CD8-positive, alpha-beta memory T cell (primary cell): ENCODE measurements at regions of chr11 and their contacts with region 1.

Region 1: GRCh38 chr11:46700241-46701077 is at the starts of genes ARHGAP1 and ZNF408:
- DNase-seq: peak; percentile 98 to 100 (median 99)
- H3K4me3 ChIP-seq: peak within 1 kb of the TSS; percentile 90
- H3K4me3 Mint-ChIP-seq: peak within 1 kb of the TSS; percentile 95 to 100 (median 99)
- H3K27ac ChIP-seq: peak within 1 kb of the TSS; percentile 92
- H3K27ac Mint-ChIP-seq: peak within 1 kb of the TSS; percentile 78 to 98 (median 94)
- H3K4me1 ChIP-seq: peaks cover 55% of the 10 kb centered on the region
- H3K4me1 Mint-ChIP-seq: peaks cover 43 to 74% (median 58%) of the 10 kb centered on the region in 3 donors
- H3K27me3 ChIP-seq: no peaks in the 10 kb centered on the region
- H3K27me3 Mint-ChIP-seq: no peaks in the 10 kb centered on the region
- total RNA-seq, gene ARHGAP1: 56.8 TPM
- total RNA-seq, gene ZNF408: 13.2 to 14.4 TPM

Region 2: DNA sequence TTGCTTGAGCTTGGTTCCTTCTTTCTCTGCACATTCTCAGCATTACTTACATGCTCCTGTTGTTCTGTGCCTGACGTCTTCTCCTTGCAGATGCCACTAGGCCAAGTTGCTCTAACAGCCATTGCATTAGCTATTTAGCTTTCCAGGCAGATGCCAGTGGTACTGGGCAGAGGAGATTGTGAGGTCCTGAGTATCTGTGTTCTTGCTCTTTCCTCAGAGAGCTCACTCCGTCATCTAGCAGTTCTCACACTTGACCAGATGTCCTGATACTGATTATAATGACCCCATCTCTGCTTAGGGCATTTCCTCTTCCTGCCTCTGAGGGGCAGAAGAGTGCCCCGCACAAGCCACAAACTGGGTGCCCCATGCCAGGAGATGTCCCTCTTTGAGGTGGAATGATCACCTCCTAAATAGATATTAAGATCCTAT is 30.7 kb before region 1 on chr11:
- CTCF ChIA-PET with region 1: interaction called, 10 read pairs
- POLR2A ChIA-PET with region 1: interaction called, 12 read pairs
- DNase-seq: peak in 1 of 5 donors; percentile 36
- H3K4me3 ChIP-seq: no peak overlapping the region
- H3K4me3 Mint-ChIP-seq: peak overlapping the region in 4 of 7 donors; percentile 18 to 58 (median 44)
- H3K27ac ChIP-seq: no peak overlapping the region
- H3K27ac Mint-ChIP-seq: peak overlapping the region; percentile 30 to 96 (median 72)
- H3K4me1 ChIP-seq: peaks cover 61% of the 10 kb centered on the region
- H3K4me1 Mint-ChIP-seq: peaks cover 41 to 53% (median 49%) of the 10 kb centered on the region in 3 donors
- H3K27me3 ChIP-seq: no peaks in the 10 kb centered on the region
- H3K27me3 Mint-ChIP-seq: no peaks in the 10 kb centered on the region

Region 3: GRCh38 chr11:46675288-46675851 is 25.1 kb before region 1 on chr11:
- CTCF ChIA-PET with region 1: interaction called, 10 read pairs
- POLR2A ChIA-PET with region 1: interaction called, 12 read pairs
- DNase-seq: peak in 1 of 5 donors; percentile 22
- H3K4me3 ChIP-seq: no peak overlapping the region
- H3K4me3 Mint-ChIP-seq: no peak overlapping the region
- H3K27ac ChIP-seq: peak overlapping the region; percentile 34
- H3K27ac Mint-ChIP-seq: peak overlapping the region in 7 of 8 donors; percentile 7 to 97 (median 86)
- H3K4me1 ChIP-seq: peaks cover 70% of the 10 kb centered on the region
- H3K4me1 Mint-ChIP-seq: peaks cover 52 to 66% (median 55%) of the 10 kb centered on the region in 3 donors
- H3K27me3 ChIP-seq: no peaks in the 10 kb centered on the region
- H3K27me3 Mint-ChIP-seq: no peaks in the 10 kb centered on the region

Region 4: GRCh38 chr11:46710821-46711269 is 10.4 kb after region 1 on chr11:
- CTCF ChIA-PET with region 1: no interaction called
- POLR2A ChIA-PET with region 1: no interaction called
- DNase-seq: no peak
- H3K4me3 ChIP-seq: no peak overlapping the region
- H3K4me3 Mint-ChIP-seq: no peak overlapping the region
- H3K27ac ChIP-seq: no peak overlapping the region
- H3K27ac Mint-ChIP-seq: no peak overlapping the region
- H3K4me1 ChIP-seq: no peaks in the 10 kb centered on the region
- H3K4me1 Mint-ChIP-seq: peaks cover 0 to 6% (median 0%) of the 10 kb centered on the region in 3 donors
- H3K27me3 ChIP-seq: no peaks in the 10 kb centered on the region
- H3K27me3 Mint-ChIP-seq: no peaks in the 10 kb centered on the region